OCI-LY7 (cell line): ENCODE measurements at regions of chr1 and their contacts with region 1.

Region 1: GRCh38 chr1:93033785-93034184 is 45.3 kb upstream of the MTF2 start:
- DNase-seq: peak; percentile 77
- H3K4me3 ChIP-seq: peak overlapping the region; percentile 59
- H3K27ac ChIP-seq: peak overlapping the region; percentile 97
- H3K4me1 ChIP-seq: peaks cover 94% of the 10 kb centered on the region
- CTCF ChIP-seq: no peak

Region 2: DNA sequence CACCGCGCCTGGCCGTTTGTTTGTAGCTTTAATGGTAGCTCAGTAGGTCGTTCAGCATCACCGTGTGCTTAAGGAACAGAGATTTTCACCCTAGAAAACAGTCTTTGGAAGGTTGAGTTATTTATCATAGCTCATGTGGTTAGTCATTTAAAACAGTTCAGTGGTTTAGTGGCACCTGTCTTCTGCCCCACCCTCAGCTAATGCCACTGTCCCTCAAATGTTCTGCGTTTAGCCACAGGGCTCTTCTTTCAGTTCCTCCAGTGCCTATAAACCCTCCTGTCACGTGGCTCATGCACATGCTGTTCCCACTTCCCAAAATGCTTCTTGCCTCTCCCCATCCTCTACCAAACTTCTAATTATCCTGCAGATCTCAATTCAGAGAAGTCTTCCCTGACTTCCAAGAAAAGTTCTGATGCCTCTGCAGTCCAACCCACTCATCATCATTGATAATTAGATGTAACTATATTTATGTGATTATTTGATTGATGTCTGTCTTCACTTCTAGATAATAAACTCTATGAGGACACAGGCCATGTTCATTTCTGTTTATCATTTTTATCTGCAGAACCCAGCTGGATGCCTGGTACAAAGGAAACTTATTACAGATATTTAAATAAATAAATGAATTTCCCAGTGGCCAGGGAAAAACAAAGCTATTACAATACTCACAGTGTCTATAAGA is 58.1 kb before region 1 on chr1:
- CTCF ChIA-PET with region 1: no interaction called
- POLR2A ChIA-PET with region 1: interaction called, 3 read pairs
- intact Hi-C with region 1: loop called (anchors 1 kb)
- DNase-seq: peak; percentile 92
- H3K4me3 ChIP-seq: peak overlapping the region; percentile 44
- H3K27ac ChIP-seq: peak overlapping the region; percentile 96
- H3K4me1 ChIP-seq: peaks cover 99% of the 10 kb centered on the region
- CTCF ChIP-seq: no peak

Region 3: GRCh38 chr1:93021539-93022134 is 12.1 kb before region 1 on chr1:
- CTCF ChIA-PET with region 1: interaction called, 5 read pairs
- POLR2A ChIA-PET with region 1: interaction called, 61 read pairs
- intact Hi-C with region 1: loop called (anchors 1 kb)
- DNase-seq: peak; percentile 87
- H3K4me3 ChIP-seq: peak overlapping the region; percentile 40
- H3K27ac ChIP-seq: peak overlapping the region; percentile 75
- H3K4me1 ChIP-seq: peaks cover 57% of the 10 kb centered on the region
- CTCF ChIP-seq: peak; percentile 100